ENCODE measurements at regions of chr11 and their contacts with region 1.

Region 1: DNA sequence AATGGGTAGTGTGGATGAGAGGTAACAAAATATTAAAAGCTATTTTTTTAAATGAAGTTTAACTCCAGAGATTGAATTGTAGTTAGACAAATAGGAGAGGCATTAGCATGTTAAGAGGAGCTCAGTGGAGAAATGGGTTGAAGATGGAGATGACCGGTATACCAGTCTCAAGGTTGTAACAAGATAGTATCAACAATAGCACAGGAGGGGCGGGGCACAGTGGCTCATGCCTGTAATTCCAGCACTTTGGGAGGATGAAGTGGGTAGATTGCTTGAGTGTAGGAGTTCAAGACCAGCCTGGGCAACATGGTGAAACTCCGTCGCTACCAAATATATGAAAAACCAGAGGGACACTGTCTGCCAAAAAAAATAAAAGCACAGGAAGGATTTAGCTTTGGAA is 6.0 kb upstream of the ANKRD42 start:
- DNase-seq: no peak
- H3K4me3 ChIP-seq: no peak overlapping the region
- H3K27ac ChIP-seq: no peak overlapping the region
- H3K4me1 ChIP-seq: peaks cover 0 to 7% (median 6%) of the 10 kb centered on the region in 4 donors
- H3K27me3 ChIP-seq: no peaks in the 10 kb centered on the region
- CTCF ChIP-seq: no peak
- EP300 ChIP-seq: no peak
- POLR2A ChIP-seq: no peak

Region 2: GRCh38 chr11:83170865-83171264 is 16.6 kb before region 1 on chr11:
- intact Hi-C with region 1: loop called (anchors 2 kb)
- DNase-seq: no peak
- H3K4me3 ChIP-seq: peak overlapping the region in 1 of 4 donors; percentile 13
- H3K27ac ChIP-seq: no peak overlapping the region
- H3K4me1 ChIP-seq: peaks cover 0 to 59% (median 55%) of the 10 kb centered on the region in 4 donors
- H3K27me3 ChIP-seq: no peaks in the 10 kb centered on the region
- CTCF ChIP-seq: no peak
- EP300 ChIP-seq: no peak
- POLR2A ChIP-seq: no peak

Measured in sigmoid colon (tissue), 7 donors.